ENCODE measurements at regions of chr1 and their contacts with region 1.

Region 1: GRCh38 chr1:197868751-197869489 is 33.5 kb upstream of the C1orf53 start:
- DNase-seq: peak in 1 of 2 donors; percentile 66
- ATAC-seq: peak; percentile 80 to 97 (median 89)
- H3K4me3 ChIP-seq: no peak overlapping the region
- H3K4me3 Mint-ChIP-seq: no peak overlapping the region
- H3K27ac ChIP-seq: no peak overlapping the region
- H3K27ac Mint-ChIP-seq: no peak overlapping the region
- H3K4me1 ChIP-seq: no peaks in the 10 kb centered on the region
- H3K4me1 Mint-ChIP-seq: peaks cover 0 to 8% of the 10 kb centered on the region in 2 donors
- H3K27me3 ChIP-seq: no peaks in the 10 kb centered on the region
- H3K27me3 Mint-ChIP-seq: peaks cover 0 to 12% of the 10 kb centered on the region in 2 donors
- CTCF ChIP-seq: peak; percentile 75

Region 2: DNA sequence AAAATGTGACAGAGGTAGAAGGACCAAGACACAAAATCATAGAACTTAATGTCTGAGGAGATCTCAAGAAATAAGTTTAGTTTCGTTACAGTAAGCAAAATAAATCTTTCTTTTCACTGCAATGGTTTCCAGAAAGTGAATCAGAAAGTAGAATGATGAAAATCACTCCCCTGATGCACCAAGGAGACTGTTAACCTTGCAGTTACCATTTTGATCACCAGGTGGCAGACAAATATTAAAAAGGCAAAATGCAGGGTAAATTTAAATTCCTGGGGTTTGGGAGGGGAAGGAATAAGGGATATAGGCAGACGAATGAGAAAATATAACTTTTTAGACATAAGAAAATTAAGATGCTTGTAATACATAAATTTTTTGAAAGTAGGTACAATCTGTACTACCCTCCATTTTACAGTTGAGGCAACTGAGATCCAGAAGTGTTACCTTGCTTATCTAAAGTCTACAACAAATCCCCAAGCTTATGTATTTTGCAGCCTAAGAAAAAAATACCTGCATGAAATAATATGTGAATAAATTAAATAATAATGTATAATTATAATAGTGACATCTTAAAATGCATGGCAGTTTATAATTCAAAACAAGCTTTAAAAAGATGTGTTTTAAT is 347.7 kb before region 1 on chr1:
- intact Hi-C with region 1: loop called (anchors 2 kb)
- DNase-seq: peak in 1 of 2 donors; percentile 63
- ATAC-seq: peak in 2 of 3 donors; percentile 57 to 64
- H3K4me3 ChIP-seq: no peak overlapping the region
- H3K4me3 Mint-ChIP-seq: no peak overlapping the region
- H3K27ac ChIP-seq: no peak overlapping the region
- H3K27ac Mint-ChIP-seq: no peak overlapping the region
- H3K4me1 ChIP-seq: no peaks in the 10 kb centered on the region
- H3K4me1 Mint-ChIP-seq: peaks cover 0 to 5% of the 10 kb centered on the region in 2 donors
- H3K27me3 ChIP-seq: no peaks in the 10 kb centered on the region
- H3K27me3 Mint-ChIP-seq: no peaks in the 10 kb centered on the region
- CTCF ChIP-seq: peak; percentile 84

Region 3: GRCh38 chr1:197614916-197615692 is 253.8 kb before region 1 on chr1:
- intact Hi-C with region 1: loop called (anchors 1 kb)
- DNase-seq: peak in 1 of 2 donors; percentile 59
- ATAC-seq: peak; percentile 57 to 77 (median 61)
- H3K4me3 ChIP-seq: no peak overlapping the region
- H3K4me3 Mint-ChIP-seq: no peak overlapping the region
- H3K27ac ChIP-seq: no peak overlapping the region
- H3K27ac Mint-ChIP-seq: no peak overlapping the region
- H3K4me1 ChIP-seq: no peaks in the 10 kb centered on the region
- H3K4me1 Mint-ChIP-seq: no peaks in the 10 kb centered on the region
- H3K27me3 ChIP-seq: no peaks in the 10 kb centered on the region
- H3K27me3 Mint-ChIP-seq: no peaks in the 10 kb centered on the region
- CTCF ChIP-seq: peak; percentile 60

Region 4: GRCh38 chr1:197692965-197693364 is 176.0 kb before region 1 on chr1:
- intact Hi-C with region 1: loop called (anchors 5 kb)
- DNase-seq: no peak
- ATAC-seq: no peak
- H3K4me3 ChIP-seq: no peak overlapping the region
- H3K4me3 Mint-ChIP-seq: no peak overlapping the region
- H3K27ac ChIP-seq: no peak overlapping the region
- H3K27ac Mint-ChIP-seq: no peak overlapping the region
- H3K4me1 ChIP-seq: no peaks in the 10 kb centered on the region
- H3K4me1 Mint-ChIP-seq: peaks cover 21 to 36% of the 10 kb centered on the region in 2 donors
- H3K27me3 ChIP-seq: no peaks in the 10 kb centered on the region
- H3K27me3 Mint-ChIP-seq: no peaks in the 10 kb centered on the region
- CTCF ChIP-seq: peak; percentile 21

Region 5: GRCh38 chr1:198088360-198089071 is 219.6 kb after region 1 on chr1:
- intact Hi-C with region 1: no loop called
- DNase-seq: peak in 1 of 2 donors; percentile 68
- ATAC-seq: peak in 2 of 3 donors; percentile 53 to 65
- H3K4me3 ChIP-seq: no peak overlapping the region
- H3K4me3 Mint-ChIP-seq: no peak overlapping the region
- H3K27ac ChIP-seq: no peak overlapping the region
- H3K27ac Mint-ChIP-seq: no peak overlapping the region
- H3K4me1 ChIP-seq: no peaks in the 10 kb centered on the region
- H3K4me1 Mint-ChIP-seq: peaks cover 5% of the 10 kb centered on the region in 2 donors
- H3K27me3 ChIP-seq: no peaks in the 10 kb centered on the region
- H3K27me3 Mint-ChIP-seq: peaks cover 2 to 6% of the 10 kb centered on the region in 2 donors
- CTCF ChIP-seq: peak; percentile 87